ENCODE measurements at regions of chr20 and their contacts with region 1.

Region 1: GRCh38 chr20:49219089-49219923 is at the start of gene DDX27:
- DNase-seq: peak; percentile 85 to 98 (median 97)
- ATAC-seq: peak; percentile 88
- H3K4me3 Mint-ChIP-seq: peak within 1 kb of the TSS; percentile 87 to 99 (median 96)
- H3K27ac Mint-ChIP-seq: peak within 1 kb of the TSS; percentile 94 to 100 (median 98)
- H3K4me1 Mint-ChIP-seq: peaks cover 7 to 37% (median 30%) of the 10 kb centered on the region in 4 donors
- H3K27me3 Mint-ChIP-seq: no peaks in the 10 kb centered on the region
- polyA plus RNA-seq, gene DDX27: 28.4 to 57.7 (median 37.9) TPM

Region 2: GRCh38 chr20:49100972-49101371 is 118.3 kb before region 1 on chr20:
- POLR2A ChIA-PET with region 1: no interaction called
- DNase-seq: no peak
- ATAC-seq: peak in 1 of 2 donors; percentile 33
- H3K4me3 Mint-ChIP-seq: peak overlapping the region in 2 of 10 donors; percentile 7 to 21
- H3K27ac Mint-ChIP-seq: peak overlapping the region; percentile 48 to 87 (median 66)
- H3K4me1 Mint-ChIP-seq: peaks cover 2 to 19% (median 10%) of the 10 kb centered on the region in 4 donors
- H3K27me3 Mint-ChIP-seq: no peaks in the 10 kb centered on the region

Region 3: DNA sequence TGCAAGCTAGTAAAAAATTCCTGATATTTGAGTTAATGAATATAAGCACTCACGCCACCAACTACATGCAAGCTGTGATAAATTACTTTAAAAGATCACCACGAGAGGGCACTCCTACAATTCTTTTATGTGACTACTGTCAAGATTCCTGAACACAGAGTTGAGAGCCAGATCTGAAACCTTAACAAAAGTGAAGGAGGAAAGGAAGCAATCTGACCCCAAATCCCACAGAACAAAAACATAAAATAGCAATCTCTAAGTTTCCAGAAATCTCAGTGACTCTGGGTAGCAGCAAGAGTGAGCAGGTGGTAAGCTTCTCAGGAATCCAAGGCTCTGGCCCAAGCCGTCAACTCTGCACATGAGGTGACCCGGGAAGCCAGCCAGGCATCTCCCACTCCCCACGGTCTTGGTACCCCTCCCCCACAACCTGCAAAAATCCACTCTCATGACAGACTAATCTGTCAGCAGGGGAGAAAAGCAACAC is 86.3 kb before region 1 on chr20:
- POLR2A ChIA-PET with region 1: interaction called, 11 read pairs
- DNase-seq: peak in 5 of 10 donors; percentile 21 to 62 (median 59)
- ATAC-seq: peak; percentile 54 to 78
- H3K4me3 Mint-ChIP-seq: no peak overlapping the region
- H3K27ac Mint-ChIP-seq: peak overlapping the region; percentile 1 to 84 (median 42)
- H3K4me1 Mint-ChIP-seq: peaks cover 6 to 18% (median 9%) of the 10 kb centered on the region in 4 donors
- H3K27me3 Mint-ChIP-seq: no peaks in the 10 kb centered on the region

Region 4: DNA sequence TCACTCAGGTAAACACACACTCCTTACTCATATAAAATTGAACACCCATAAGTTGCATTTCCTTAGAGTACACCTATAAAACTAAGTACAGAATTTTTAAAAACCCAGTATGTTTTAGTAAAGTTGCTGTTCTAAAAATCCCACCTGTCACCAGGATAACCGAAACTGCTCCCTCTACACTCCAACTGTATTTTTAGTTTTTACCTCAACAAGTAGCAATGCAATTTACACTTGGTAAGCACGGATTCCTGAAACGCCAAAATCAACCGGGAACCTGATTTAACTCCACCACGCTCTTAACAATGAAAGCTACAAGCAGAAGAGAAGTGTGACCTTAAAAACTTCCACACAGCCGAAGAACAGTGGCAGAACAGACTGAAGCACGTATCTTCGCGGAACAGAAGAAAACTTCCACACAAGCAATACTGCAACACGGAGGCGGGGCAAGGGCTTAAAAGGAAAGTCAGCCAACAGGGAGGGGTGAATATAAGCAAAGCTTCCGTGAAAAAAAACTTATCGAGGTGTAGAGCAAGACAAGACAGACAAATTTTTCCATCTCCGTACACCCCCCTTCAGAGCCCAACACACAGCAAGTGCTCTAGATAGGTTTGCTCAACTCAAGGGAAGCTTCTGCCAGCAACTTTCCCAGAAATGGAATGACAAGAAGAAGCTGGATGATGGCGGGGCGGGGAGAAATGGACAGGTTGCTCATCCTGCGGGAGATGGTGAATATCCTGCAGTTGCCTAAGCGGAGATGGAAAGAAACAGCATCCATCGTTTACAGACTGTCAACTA is 32.6 kb before region 1 on chr20:
- POLR2A ChIA-PET with region 1: interaction called, 19 read pairs
- DNase-seq: peak; percentile 36 to 85 (median 59)
- ATAC-seq: peak; percentile 37 to 51
- H3K4me3 Mint-ChIP-seq: peak overlapping the region; percentile 86 to 96 (median 90)
- H3K27ac Mint-ChIP-seq: peak overlapping the region; percentile 78 to 95 (median 91)
- H3K4me1 Mint-ChIP-seq: peaks cover 21 to 56% (median 52%) of the 10 kb centered on the region in 4 donors
- H3K27me3 Mint-ChIP-seq: peaks cover 0 to 2% (median 0%) of the 10 kb centered on the region in 5 donors

Measured in naive thymus-derived CD8-positive, alpha-beta T cell (primary cell).